ENCODE measurements at regions of chr1 and their contacts with region 1.

Region 1: GRCh38 chr1:91282695-91283420 is 121.8 kb downstream of the HFM1 start:
- DNase-seq: peak; percentile 82
- ATAC-seq: peak; percentile 67
- H3K4me3 ChIP-seq: no peak overlapping the region
- H3K27ac ChIP-seq: no peak overlapping the region
- H3K4me1 ChIP-seq: no peaks in the 10 kb centered on the region
- H3K27me3 ChIP-seq: peaks cover 14% of the 10 kb centered on the region
- CTCF ChIP-seq: peak; percentile 88

Region 2: DNA sequence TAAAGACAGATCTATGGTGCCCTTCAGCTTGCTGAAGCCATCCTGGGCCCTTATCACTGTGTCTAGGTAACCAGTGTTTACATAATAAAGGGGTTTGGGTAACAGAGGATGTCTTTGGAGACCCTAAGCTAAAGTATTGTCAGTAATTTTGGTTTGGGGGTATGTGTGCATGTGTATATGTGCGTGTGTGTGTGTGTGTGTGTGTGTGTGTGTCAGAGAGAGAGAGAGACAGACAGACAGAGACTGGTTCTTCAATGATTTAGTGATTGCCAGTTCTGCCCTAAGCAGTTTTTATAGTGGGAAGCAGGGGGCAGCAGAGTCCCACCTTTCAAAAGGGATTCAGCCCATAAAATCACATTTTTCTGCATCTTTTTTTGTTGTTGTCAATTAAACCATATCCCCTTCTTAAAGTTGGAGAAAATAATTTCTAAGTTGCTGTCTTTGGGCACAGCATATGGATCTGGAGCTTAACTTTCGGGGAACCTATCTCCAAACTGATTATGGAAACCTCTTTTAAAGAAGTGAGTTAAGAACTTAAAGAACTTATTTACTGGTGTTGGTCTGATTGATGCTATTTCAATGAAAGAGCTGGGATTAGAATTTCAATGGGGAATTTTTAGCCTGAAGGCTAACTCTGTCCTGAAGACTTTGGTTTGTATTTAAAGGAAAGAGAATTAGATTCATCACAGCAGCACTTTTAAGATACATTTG is 1236.8 kb before region 1 on chr1:
- CTCF ChIA-PET with region 1: no interaction called
- POLR2A ChIA-PET with region 1: no interaction called
- intact Hi-C with region 1: loop called (anchors 2 kb)
- DNase-seq: peak; percentile 50
- ATAC-seq: peak; percentile 77
- H3K4me3 ChIP-seq: no peak overlapping the region
- H3K27ac ChIP-seq: no peak overlapping the region
- H3K4me1 ChIP-seq: no peaks in the 10 kb centered on the region
- H3K27me3 ChIP-seq: peaks cover 18% of the 10 kb centered on the region
- CTCF ChIP-seq: peak; percentile 73

Region 3: DNA sequence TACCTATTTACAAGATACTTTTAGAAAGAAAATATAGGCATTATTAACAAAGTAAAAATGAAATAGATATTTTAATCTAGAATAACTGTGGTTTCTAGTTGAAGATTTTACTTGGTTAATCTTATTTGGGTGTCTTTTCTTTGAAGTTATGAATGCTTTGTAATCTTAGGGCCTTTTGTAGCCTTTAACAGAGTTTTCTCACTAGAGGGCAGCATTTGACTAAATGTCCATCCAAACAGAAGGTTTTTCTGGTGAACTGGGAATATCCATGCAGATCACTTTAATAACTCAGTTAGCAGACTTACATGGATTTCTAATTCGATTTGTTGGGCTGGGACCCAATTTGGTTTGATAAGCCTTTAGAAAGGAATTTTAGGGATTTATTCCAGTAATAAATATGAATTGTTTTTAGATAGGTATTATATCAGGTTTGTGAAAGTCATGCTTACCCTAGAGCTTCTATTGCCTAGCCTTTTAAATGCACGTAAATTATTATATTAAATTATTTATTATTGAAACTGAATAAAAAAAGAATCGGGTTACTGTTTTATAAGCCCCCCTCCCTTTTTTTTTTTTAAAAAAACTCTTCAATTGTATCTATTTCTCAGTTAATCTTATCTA is 1168.2 kb before region 1 on chr1:
- CTCF ChIA-PET with region 1: no interaction called
- POLR2A ChIA-PET with region 1: no interaction called
- intact Hi-C with region 1: loop called (anchors 10 kb)
- DNase-seq: peak; percentile 77
- ATAC-seq: peak; percentile 42; the same call in 1 of the 2 replicates
- H3K4me3 ChIP-seq: no peak overlapping the region
- H3K27ac ChIP-seq: no peak overlapping the region
- H3K4me1 ChIP-seq: no peaks in the 10 kb centered on the region
- H3K27me3 ChIP-seq: peaks cover 58% of the 10 kb centered on the region
- CTCF ChIP-seq: peak; percentile 80

Region 4: DNA sequence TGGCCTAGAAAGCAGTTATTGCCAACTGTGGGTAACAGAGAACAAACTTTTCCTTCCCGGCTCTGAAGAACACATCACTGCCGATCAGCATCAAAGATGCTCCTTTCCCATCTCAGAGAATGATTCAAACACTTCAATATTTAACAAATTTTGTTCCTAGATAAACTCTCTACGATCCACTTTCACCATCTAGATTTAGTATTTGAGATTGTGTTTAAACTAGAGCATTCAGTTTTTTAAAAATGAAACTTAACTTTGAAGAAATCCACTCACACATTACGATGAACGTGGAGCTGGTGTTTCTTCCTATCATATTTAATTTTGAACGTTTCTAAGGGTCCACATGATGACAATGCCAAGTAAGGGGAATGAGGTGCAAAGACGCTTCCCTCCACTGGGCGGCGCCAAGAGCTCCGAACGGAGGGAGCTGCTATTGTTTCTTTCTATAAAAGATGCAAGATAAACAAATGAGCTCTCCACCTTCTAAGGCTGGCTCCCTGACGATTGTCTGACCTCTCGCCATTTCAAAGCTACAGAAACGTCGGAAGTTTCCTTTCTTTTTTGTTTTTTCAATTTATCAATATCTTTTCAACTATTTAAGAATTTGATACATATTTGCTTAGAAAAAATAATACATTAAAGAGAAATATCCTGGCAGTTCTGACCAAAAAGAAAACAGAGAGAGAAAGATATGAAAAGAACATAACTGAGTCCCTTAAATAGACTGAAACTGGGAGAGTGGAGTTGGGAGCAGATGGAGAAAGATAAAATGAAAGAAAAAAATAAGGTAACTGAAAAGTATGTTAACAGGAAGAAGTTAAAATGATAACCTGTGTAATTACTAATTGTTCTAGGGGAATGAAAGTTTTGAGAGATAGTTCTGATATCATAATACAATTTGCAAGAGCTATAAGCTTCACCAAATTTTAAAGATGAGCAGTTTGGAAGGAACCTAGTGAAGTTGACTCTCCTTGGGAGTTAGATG is 561.4 kb before region 1 on chr1:
- CTCF ChIA-PET with region 1: no interaction called
- POLR2A ChIA-PET with region 1: no interaction called
- intact Hi-C with region 1: loop called (anchors 1 kb)
- DNase-seq: peak; percentile 83
- ATAC-seq: peak; percentile 65
- H3K4me3 ChIP-seq: no peak overlapping the region
- H3K27ac ChIP-seq: no peak overlapping the region
- H3K4me1 ChIP-seq: 0 out of 2 replicates have a peak, but pooled peaks cover 7% of the 10 kb centered on the region
- H3K27me3 ChIP-seq: peaks cover 24% of the 10 kb centered on the region
- CTCF ChIP-seq: peak; percentile 86

Region 5: GRCh38 chr1:91165033-91165654 is 117.7 kb before region 1 on chr1:
- CTCF ChIA-PET with region 1: interaction called, 18 read pairs
- POLR2A ChIA-PET with region 1: no interaction called
- intact Hi-C with region 1: loop called (anchors 1 kb)
- DNase-seq: peak; percentile 75
- ATAC-seq: peak; percentile 95
- H3K4me3 ChIP-seq: no peak overlapping the region
- H3K27ac ChIP-seq: no peak overlapping the region
- H3K4me1 ChIP-seq: no peaks in the 10 kb centered on the region
- H3K27me3 ChIP-seq: 0 out of 2 replicates have a peak, but pooled peaks cover 8% of the 10 kb centered on the region
- CTCF ChIP-seq: peak; percentile 94

Region 6: DNA sequence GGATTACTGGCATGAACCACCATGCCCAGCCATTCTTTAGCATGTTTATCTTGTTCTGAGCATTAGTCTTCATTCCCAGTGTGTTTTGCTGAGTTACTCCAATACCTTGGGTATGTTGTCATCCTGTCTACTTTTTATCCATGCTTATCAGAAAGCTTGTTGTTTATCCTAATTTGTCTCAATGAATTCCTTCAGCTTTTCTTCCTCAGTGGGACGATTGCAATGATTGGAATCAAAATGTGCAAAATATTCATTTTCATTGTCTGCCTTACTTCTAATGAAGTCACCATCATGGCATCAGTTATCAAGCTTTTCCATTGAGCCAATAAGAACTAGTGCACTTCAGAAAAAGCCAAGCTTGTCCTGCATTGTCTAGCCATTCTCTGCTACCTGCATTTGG is 48.7 kb before region 1 on chr1:
- CTCF ChIA-PET with region 1: no interaction called
- POLR2A ChIA-PET with region 1: no interaction called
- intact Hi-C with region 1: no loop called
- DNase-seq: no peak
- ATAC-seq: no peak
- H3K4me3 ChIP-seq: no peak overlapping the region
- H3K27ac ChIP-seq: no peak overlapping the region
- H3K4me1 ChIP-seq: no peaks in the 10 kb centered on the region
- H3K27me3 ChIP-seq: peaks cover 45% of the 10 kb centered on the region
- CTCF ChIP-seq: no peak

Region 7: GRCh38 chr1:91404151-91405012 is 121.5 kb after region 1 on chr1 and contains the start of gene HFM1:
- CTCF ChIA-PET with region 1: no interaction called
- POLR2A ChIA-PET with region 1: no interaction called
- intact Hi-C with region 1: loop called (anchors 1 kb)
- DNase-seq: no peak
- ATAC-seq: peak; percentile 56
- H3K4me3 ChIP-seq: peak within 1 kb of the TSS; percentile 46
- H3K27ac ChIP-seq: no peak within 1 kb of the TSS
- H3K4me1 ChIP-seq: no peaks in the 10 kb centered on the region
- H3K27me3 ChIP-seq: peaks cover 74% of the 10 kb centered on the region
- CTCF ChIP-seq: no peak
- total RNA-seq, gene HFM1: not detected in 2 replicates

Region 8: GRCh38 chr1:91500756-91501522 is 218.1 kb after region 1 on chr1 and contains the start of gene CDC7:
- CTCF ChIA-PET with region 1: no interaction called
- POLR2A ChIA-PET with region 1: no interaction called
- intact Hi-C with region 1: loop called (anchors 2 kb)
- DNase-seq: peak; percentile 87
- ATAC-seq: peak; percentile 82
- H3K4me3 ChIP-seq: peak within 1 kb of the TSS; percentile 78
- H3K27ac ChIP-seq: peak within 1 kb of the TSS; percentile 90
- H3K4me1 ChIP-seq: peaks cover 27% of the 10 kb centered on the region
- H3K27me3 ChIP-seq: no peaks in the 10 kb centered on the region
- CTCF ChIP-seq: peak; percentile 62
- total RNA-seq, gene CDC7: 10.0 and 11.1 TPM in 2 replicates

Measured in PC-3 (cell line).